Right ventricle myocardium inferior (tissue), 1 donor: ENCODE measurements at regions of chr13 and their contacts with region 1.

Region 1: DNA sequence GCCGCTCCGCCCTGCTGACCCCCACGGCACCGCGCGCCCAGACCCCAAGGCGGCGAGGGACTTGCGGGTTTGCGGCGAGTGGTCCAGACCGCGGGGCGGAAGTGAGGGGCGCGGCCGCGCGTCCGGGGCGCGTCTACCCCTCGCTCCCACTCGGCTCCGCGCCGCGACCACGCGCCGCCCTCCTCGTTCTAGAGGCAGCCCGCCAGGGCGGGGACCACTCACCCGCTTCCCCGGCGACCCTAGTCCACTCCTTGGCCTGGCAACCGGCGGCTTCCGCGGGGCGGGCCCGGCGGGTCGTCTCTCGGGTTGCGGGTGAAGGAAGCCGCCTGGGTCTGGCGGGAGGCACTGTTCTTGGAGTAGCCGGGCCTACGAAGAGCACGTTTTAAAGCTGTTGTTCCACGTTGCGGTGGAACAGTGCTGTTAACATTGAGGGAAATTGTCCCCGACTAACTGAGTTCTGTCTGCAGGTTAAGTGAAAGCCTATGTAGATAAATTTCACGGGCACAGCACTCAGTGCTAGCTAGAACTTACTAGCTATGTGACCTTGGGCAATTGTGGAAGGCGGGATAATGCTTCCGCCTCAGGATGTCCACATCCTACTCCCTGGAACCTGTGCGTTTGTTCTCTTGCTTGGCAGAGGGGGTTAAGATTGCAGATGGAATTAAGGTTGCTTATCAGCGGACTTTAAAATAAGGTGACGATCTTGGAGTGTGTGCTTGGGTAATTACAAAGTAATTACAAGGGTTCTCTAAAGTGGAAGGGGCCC is at the start of gene NEK3:
- DNase-seq: peak; percentile 85
- ATAC-seq: peak; percentile 92
- total RNA-seq, gene NEK3: 6.6 TPM

Region 2: DNA sequence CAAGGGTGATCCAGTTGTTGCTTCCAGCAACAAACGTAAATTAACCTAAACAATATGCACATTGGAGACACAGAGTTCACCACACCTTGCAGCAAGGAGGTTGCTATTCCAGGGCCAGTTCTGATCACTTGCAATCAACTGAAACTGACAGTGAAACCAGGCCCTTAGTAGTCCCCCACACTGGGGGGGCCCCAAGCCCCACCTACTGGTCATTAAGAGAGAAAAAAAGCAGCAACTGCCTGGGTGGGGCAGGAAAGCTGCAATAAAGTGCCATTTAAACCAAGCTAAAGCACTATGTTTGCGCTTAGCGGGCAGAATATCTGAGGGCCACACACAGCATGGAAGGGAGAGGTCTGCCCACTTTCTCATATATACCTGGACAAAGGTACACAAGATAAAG is 199.7 kb before region 1 on chr13:
- intact Hi-C with region 1: no loop called
- DNase-seq: no peak
- ATAC-seq: no peak

Region 3: DNA sequence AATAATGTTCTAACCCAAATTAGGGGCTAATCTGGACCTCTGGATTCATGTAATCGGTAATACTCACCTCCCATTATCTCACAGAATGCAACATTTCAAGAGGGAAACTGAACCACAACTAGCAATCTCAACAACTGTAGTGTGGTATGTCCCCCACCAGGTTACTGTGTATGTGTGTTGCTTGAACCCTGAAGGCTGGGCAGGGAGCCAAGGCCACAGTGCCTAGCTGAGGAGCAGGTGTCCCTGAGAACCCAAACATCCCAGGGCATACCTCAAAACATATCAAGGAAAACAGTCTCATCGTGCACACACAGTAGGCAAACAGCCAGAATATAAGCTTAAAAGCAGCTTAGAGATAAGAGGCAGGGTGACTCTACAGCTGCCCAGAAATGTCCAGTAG is 20.4 kb after region 1 on chr13:
- intact Hi-C with region 1: no loop called
- DNase-seq: no peak
- ATAC-seq: no peak

Region 4: GRCh38 chr13:52194184-52194868 is 34.8 kb after region 1 on chr13:
- intact Hi-C with region 1: loop called (anchors 5 kb)
- DNase-seq: peak; percentile 87
- ATAC-seq: peak; percentile 96